GM12878 (cell line): ENCODE measurements at regions of chr1 and their contacts with region 1.

Region 1: DNA sequence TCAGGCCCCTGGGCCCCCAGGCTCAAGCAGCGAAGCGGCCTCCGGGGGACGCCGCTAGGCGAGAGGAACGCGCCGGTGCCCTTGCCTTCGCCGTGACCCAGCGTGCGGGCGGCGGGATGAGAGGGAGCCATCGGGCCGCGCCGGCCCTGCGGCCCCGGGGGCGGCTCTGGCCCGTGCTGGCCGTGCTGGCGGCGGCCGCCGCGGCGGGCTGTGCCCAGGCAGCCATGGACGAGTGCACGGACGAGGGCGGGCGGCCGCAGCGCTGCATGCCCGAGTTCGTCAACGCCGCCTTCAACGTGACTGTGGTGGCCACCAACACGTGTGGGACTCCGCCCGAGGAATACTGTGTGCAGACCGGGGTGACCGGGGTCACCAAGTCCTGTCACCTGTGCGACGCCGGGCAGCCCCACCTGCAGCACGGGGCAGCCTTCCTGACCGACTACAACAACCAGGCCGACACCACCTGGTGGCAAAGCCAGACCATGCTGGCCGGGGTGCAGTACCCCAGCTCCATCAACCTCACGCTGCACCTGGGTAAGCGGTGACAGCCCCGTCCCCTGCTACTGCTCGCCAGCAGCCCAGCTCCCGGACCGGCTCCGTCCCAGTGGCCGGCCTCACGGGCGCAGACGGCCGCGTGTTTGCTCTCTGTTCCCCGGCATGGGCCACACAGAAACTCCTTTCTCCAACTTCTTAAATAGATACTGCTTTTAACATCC is 539 bp downstream of the LAMC1 start:
- DNase-seq: no peak
- ATAC-seq: peak; percentile 77
- H3K4me3 ChIP-seq: peak overlapping the region; percentile 74
- H3K27ac ChIP-seq: peak overlapping the region; percentile 5
- H3K4me1 ChIP-seq: peaks cover 20% of the 10 kb centered on the region
- H3K27me3 ChIP-seq: no peaks in the 10 kb centered on the region
- CTCF ChIP-seq: peak; percentile 64 to 76 (median 68)
- EP300 ChIP-seq: no peak
- POLR2A ChIP-seq: peak; percentile 65
- RAD21 ChIP-seq: peak; percentile 47; the same call in 1 of the 2 replicates

Region 2: DNA sequence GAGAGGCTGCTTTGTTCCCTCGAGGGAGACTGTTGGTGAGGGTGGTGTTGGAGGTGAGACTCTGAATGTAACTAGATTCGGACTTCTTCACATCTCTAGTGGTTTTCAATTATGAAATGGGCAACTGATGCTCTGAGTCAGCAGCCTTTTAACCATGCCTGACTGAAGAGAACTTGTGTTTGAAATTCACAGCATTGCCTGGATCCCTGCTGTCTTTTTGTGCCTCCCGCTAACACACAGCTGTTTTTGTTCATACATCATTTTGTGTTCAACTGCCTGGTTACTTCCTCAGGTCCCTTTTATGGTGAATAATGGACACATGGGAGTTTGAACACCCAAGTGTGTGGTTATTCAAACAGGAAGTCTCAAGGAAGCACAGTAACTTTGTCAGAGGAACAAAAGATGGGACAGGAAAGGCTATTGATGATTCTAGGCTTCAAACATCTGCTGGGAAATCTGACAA is 16.3 kb after region 1 on chr1:
- CTCF ChIA-PET with region 1: interaction called, 8 read pairs
- POLR2A ChIA-PET with region 1: interaction called, 5 read pairs
- RAD21 ChIA-PET with region 1: interaction called, 64 read pairs
- SMC1A ChIA-PET with region 1: interaction called, 80 read pairs
- in situ Hi-C with region 1: no loop called
- intact Hi-C with region 1: no loop called
- DNase-seq: no peak
- ATAC-seq: peak; percentile 86
- H3K4me3 ChIP-seq: no peak overlapping the region
- H3K27ac ChIP-seq: no peak overlapping the region
- H3K4me1 ChIP-seq: peaks cover 14% of the 10 kb centered on the region
- H3K27me3 ChIP-seq: no peaks in the 10 kb centered on the region
- CTCF ChIP-seq: no peak
- EP300 ChIP-seq: no peak
- POLR2A ChIP-seq: no peak
- RAD21 ChIP-seq: no peak

Region 3: GRCh38 chr1:183048087-183049085 is 24.6 kb after region 1 on chr1:
- CTCF ChIA-PET with region 1: interaction called, 16 read pairs
- POLR2A ChIA-PET with region 1: interaction called, 5 read pairs
- RAD21 ChIA-PET with region 1: interaction called, 64 read pairs
- SMC1A ChIA-PET with region 1: interaction called, 80 read pairs
- in situ Hi-C with region 1: no loop called
- intact Hi-C with region 1: loop called (anchors 2 kb)
- DNase-seq: peak; percentile 78
- ATAC-seq: peak; percentile 98
- H3K4me3 ChIP-seq: no peak overlapping the region
- H3K27ac ChIP-seq: peak overlapping the region; percentile 46
- H3K4me1 ChIP-seq: peaks cover 29% of the 10 kb centered on the region
- H3K27me3 ChIP-seq: no peaks in the 10 kb centered on the region
- CTCF ChIP-seq: no peak
- EP300 ChIP-seq: peak in 1 of 2 experiments; percentile 61; a peak in 1 of 4 replicates
- POLR2A ChIP-seq: no peak
- RAD21 ChIP-seq: no peak

Region 4: DNA sequence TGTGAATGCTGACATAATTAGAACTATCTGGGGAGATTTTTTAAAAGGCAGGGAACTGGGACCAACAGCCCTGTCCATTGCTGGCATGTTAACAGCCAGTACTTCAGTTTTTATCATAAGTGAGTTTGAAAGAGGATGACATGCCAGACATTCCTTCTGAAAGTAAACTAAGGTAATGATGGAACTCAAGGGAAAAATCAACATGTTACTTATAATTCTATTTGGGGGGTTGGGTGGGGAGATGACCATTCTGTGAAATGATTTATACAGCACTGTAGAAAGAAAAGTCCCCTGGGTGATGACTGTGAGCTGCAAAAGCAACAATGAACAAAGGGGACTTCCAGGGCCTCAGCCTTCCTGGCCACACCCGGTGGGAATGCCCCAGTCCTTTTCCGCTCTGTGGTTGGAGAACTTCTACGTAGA is 156.9 kb after region 1 on chr1:
- CTCF ChIA-PET with region 1: interaction called, 3 read pairs
- POLR2A ChIA-PET with region 1: interaction called, 3 read pairs
- RAD21 ChIA-PET with region 1: interaction called, 4 read pairs
- SMC1A ChIA-PET with region 1: interaction called, 3 read pairs
- in situ Hi-C with region 1: no loop called
- intact Hi-C with region 1: loop called (anchors 2 kb)
- DNase-seq: peak; percentile 57
- ATAC-seq: peak; percentile 97
- H3K4me3 ChIP-seq: no peak overlapping the region
- H3K27ac ChIP-seq: peak overlapping the region; percentile 86
- H3K4me1 ChIP-seq: peaks cover 11% of the 10 kb centered on the region
- H3K27me3 ChIP-seq: no peaks in the 10 kb centered on the region
- CTCF ChIP-seq: no peak
- EP300 ChIP-seq: peak; percentile 63 to 64; a peak in 1 of 4 replicates
- POLR2A ChIP-seq: no peak
- RAD21 ChIP-seq: no peak